ENCODE measurements at regions of chr20 and their contacts with region 1.

Region 1: DNA sequence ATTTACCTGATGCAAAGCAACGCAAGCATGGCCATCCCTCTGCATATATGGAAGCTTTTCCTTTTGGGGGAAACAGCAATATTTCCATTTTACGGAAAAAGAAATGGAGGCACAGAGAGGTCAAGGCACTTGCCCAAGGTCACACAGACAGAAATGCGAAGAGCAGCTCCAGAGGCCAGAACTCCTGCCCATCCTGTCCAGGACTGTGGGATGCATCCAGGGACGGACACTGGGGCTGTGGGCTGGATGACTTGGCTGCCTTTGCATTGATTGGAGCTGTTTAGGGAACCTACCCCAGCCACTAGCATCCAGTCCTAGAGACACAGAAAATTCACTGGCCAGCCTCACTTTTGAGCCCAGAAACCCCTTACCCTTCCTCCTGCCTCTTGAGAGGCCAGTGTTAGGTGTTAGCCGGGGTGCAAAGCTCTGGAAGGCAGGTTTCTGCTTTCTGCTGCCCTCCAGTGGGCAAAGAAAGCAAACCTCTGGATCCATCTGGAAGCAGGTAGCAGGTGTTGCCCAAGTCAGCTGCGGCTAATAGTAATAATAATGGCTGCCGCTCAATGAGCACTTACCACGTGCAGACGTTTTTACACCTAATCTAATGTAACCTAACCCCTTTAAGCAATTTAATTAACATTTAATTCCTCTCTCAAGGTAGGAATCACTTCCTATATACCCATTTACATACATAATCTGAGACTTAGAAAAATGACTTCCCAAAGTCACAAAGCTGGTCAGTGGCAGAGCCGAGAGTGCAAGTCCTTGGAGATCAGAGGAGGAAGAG is 31.7 kb upstream of the CCN5 start:
- DNase-seq: peak; percentile 91 to 94
- H3K4me3 ChIP-seq: no peak overlapping the region
- H3K4me3 Mint-ChIP-seq: peak overlapping the region; percentile 13
- H3K27ac Mint-ChIP-seq: peak overlapping the region; percentile 3
- H3K4me1 ChIP-seq: peaks cover 21% of the 10 kb centered on the region
- H3K4me1 Mint-ChIP-seq: peaks cover 28% of the 10 kb centered on the region
- H3K27me3 ChIP-seq: no peaks in the 10 kb centered on the region
- H3K27me3 Mint-ChIP-seq: no peaks in the 10 kb centered on the region
- CTCF ChIP-seq: peak; percentile 95 to 98

Region 2: GRCh38 chr20:44625361-44625760 is 58.1 kb before region 1 on chr20:
- CTCF ChIA-PET with region 1: no interaction called
- POLR2A ChIA-PET with region 1: no interaction called
- intact Hi-C with region 1: no loop called
- DNase-seq: no peak
- H3K4me3 ChIP-seq: no peak overlapping the region
- H3K4me3 Mint-ChIP-seq: no peak overlapping the region
- H3K27ac Mint-ChIP-seq: no peak overlapping the region
- H3K4me1 ChIP-seq: no peaks in the 10 kb centered on the region
- H3K4me1 Mint-ChIP-seq: no peaks in the 10 kb centered on the region
- H3K27me3 ChIP-seq: no peaks in the 10 kb centered on the region
- H3K27me3 Mint-ChIP-seq: no peaks in the 10 kb centered on the region
- CTCF ChIP-seq: no peak

Region 3: DNA sequence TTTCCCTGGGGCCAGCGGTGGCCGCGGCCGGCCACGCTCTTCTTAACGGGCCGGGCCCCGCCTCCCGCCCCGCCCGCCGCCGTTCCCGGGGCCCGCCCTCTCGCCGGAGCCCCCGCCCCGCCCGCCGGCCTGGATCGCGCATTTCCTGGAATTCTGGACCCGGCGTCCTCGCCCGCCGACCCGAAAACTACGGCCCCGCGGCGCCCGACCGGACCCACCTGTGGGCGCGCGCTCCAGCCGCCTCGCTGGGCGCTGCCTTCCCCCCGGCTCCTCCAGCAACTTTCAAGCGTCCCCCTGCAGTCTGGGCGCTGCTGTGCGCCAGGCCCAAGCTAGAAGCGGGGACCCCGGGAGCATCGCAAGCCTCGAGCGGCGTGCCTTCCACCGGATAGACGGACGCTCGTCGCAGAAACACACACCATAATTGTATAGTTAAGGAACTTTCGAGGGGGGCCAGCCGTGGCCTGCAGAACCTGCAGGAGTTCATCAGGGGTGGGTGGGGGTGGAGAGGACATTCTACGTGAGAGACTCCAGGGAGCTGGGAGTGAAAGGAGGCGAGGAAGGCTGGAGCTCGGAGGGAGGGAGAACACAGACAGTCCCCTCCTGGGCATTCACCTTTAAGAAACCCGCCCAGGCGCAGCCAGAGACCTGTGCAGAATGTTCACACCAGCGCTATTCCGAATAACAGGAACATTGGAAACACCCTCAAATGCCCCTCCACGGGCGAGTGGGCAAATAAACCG is 31.6 kb before region 1 on chr20 and contains the start of gene ADA:
- CTCF ChIA-PET with region 1: interaction called, 26 read pairs
- POLR2A ChIA-PET with region 1: no interaction called
- intact Hi-C with region 1: loop called (anchors 1 kb)
- DNase-seq: peak; percentile 78 to 90
- H3K4me3 ChIP-seq: peak within 1 kb of the TSS; percentile 64
- H3K4me3 Mint-ChIP-seq: peak within 1 kb of the TSS; percentile 69
- H3K27ac Mint-ChIP-seq: no peak within 1 kb of the TSS
- H3K4me1 ChIP-seq: peaks cover 8% of the 10 kb centered on the region
- H3K4me1 Mint-ChIP-seq: peaks cover 12% of the 10 kb centered on the region
- H3K27me3 ChIP-seq: no peaks in the 10 kb centered on the region
- H3K27me3 Mint-ChIP-seq: peaks cover 16% of the 10 kb centered on the region
- CTCF ChIP-seq: peak in 1 of 2 experiments; percentile 14
- total RNA-seq, gene ADA: 21.1 and 23.5 TPM in 2 replicates

Region 4: DNA sequence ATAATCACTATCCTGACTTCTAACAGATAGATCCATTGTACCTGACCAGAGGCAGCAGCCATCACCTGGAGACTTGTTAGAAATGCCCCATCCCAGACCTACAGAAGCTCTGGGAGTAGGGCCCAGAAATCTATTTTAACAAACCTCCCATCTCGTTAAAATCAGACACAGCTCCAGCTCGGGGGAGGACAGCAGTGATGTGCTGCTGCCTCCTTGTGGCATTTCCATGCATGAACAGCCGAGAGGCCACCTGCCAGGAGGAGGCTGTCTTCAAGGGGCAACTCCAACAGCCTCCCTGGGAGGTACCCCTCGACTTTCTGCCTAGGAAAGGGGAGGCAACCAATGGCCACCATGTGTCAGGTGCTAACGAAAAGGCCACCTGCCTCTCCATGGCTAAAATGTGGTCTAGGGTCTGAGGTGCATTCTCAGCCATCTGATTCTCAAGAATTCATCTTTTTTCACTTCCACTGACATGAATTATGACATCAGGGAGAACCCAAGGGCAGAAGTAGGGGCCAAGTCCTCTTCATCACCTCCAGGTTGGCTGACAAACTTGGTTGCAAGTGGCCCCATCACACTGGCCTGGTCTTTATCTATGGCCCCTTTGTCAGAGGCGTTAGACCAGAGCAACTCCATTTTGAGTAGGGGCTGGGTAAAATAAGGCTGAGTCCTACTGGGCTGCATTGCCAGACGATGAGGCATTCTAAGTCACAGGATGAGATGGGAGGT is 50.0 kb after region 1 on chr20:
- CTCF ChIA-PET with region 1: interaction called, 132 read pairs
- POLR2A ChIA-PET with region 1: interaction called, 10 read pairs
- intact Hi-C with region 1: loop called (anchors 1 kb)
- DNase-seq: peak; percentile 82 to 89
- H3K4me3 ChIP-seq: no peak overlapping the region
- H3K4me3 Mint-ChIP-seq: no peak overlapping the region
- H3K27ac Mint-ChIP-seq: peak overlapping the region; percentile 9
- H3K4me1 ChIP-seq: peaks cover 36% of the 10 kb centered on the region
- H3K4me1 Mint-ChIP-seq: peaks cover 44% of the 10 kb centered on the region
- H3K27me3 ChIP-seq: no peaks in the 10 kb centered on the region
- H3K27me3 Mint-ChIP-seq: no peaks in the 10 kb centered on the region
- CTCF ChIP-seq: peak; percentile 95 to 98

Region 5: DNA sequence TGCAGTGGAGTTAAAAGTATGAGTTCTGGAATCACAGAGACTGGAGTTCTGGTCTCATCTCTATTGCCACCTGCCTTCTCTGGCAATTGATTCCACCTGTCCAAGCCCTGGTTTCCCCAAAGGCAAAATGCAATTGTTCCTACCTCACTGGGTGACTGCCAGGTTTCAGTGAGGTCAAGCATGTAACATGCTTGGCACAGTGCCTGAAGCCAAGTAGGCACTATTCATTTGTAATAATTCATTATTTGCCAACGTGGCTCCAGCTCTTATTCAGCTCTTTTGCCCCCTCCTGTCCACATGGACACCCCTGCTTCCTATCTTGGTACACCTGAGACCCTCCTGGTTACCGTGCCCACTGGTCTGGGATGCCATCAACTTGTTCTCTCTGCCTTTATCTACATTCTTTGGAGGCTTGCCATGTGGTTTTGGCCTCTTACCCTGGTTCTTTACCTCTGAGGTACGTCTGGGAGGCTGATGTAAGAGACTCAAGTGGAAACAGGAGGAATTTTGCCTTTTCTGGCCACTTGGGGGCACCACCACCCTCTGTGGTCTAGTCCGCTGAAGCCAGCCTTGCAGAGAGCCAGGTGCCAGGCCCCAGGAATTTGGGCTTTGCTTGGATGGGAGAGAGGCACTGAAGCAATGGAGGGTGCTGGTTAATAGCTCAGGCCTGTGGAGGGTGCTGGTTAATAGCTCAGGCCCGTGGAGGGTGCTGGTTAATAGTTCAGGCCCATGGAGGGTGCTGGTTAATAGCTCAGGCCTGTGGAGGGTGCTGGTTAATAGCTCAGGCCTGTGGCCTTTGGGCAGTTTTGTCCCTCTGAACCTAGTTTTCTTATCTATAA is 63.9 kb after region 1 on chr20:
- CTCF ChIA-PET with region 1: interaction called, 12 read pairs
- POLR2A ChIA-PET with region 1: no interaction called
- intact Hi-C with region 1: no loop called
- DNase-seq: peak; percentile 91 to 96
- H3K4me3 ChIP-seq: no peak overlapping the region
- H3K4me3 Mint-ChIP-seq: peak overlapping the region; percentile 66
- H3K27ac Mint-ChIP-seq: peak overlapping the region; percentile 85
- H3K4me1 ChIP-seq: peaks cover 11% of the 10 kb centered on the region
- H3K4me1 Mint-ChIP-seq: peaks cover 15% of the 10 kb centered on the region
- H3K27me3 ChIP-seq: peaks cover 2% of the 10 kb centered on the region; the same call in 1 of the 2 replicates
- H3K27me3 Mint-ChIP-seq: peaks cover 6% of the 10 kb centered on the region
- CTCF ChIP-seq: peak; percentile 92 to 96

Region 6: GRCh38 chr20:44866703-44867335 is 183.4 kb after region 1 on chr20:
- CTCF ChIA-PET with region 1: interaction called, 11 read pairs
- POLR2A ChIA-PET with region 1: no interaction called
- intact Hi-C with region 1: loop called (anchors 1 kb)
- DNase-seq: no peak
- H3K4me3 ChIP-seq: no peak overlapping the region
- H3K4me3 Mint-ChIP-seq: no peak overlapping the region
- H3K27ac Mint-ChIP-seq: no peak overlapping the region
- H3K4me1 ChIP-seq: peaks cover 11% of the 10 kb centered on the region
- H3K4me1 Mint-ChIP-seq: peaks cover 14% of the 10 kb centered on the region
- H3K27me3 ChIP-seq: no peaks in the 10 kb centered on the region
- H3K27me3 Mint-ChIP-seq: peaks cover 11% of the 10 kb centered on the region
- CTCF ChIP-seq: no peak

Measured in Caco-2 (cell line).